IMR-90 (cell line): ENCODE measurements at regions of chr6 and their contacts with region 1.

Region 1: GRCh38 chr6:159701411-159701999 is 8.5 kb upstream of the SOD2 start:
- DNase-seq: peak; percentile 97
- ATAC-seq: peak; percentile 82
- H3K4me3 ChIP-seq: no peak overlapping the region
- H3K27ac ChIP-seq: peak overlapping the region; percentile 93
- H3K4me1 ChIP-seq: peaks cover 9% of the 10 kb centered on the region
- H3K27me3 ChIP-seq: no peaks in the 10 kb centered on the region
- CTCF ChIP-seq: no peak
- POLR2A ChIP-seq: no peak
- RAD21 ChIP-seq: no peak

Region 2: GRCh38 chr6:159726918-159727716 is 25.6 kb after region 1 on chr6 and contains the start of gene WTAP:
- CTCF ChIA-PET with region 1: no interaction called
- POLR2A ChIA-PET with region 1: no interaction called
- dilution Hi-C with region 1: no loop called
- in situ Hi-C with region 1: no loop called
- intact Hi-C with region 1: loop called (anchors 2 kb)
- DNase-seq: peak; percentile 92
- ATAC-seq: peak; percentile 95
- H3K4me3 ChIP-seq: peak within 1 kb of the TSS; percentile 98
- H3K27ac ChIP-seq: peak within 1 kb of the TSS; percentile 99
- H3K4me1 ChIP-seq: peaks cover 3% of the 10 kb centered on the region; the same call in 1 of the 2 replicates
- H3K27me3 ChIP-seq: no peaks in the 10 kb centered on the region
- CTCF ChIP-seq: no peak
- POLR2A ChIP-seq: peak; percentile 94
- RAD21 ChIP-seq: no peak
- total RNA-seq, gene WTAP: 92.3 and 124 TPM in 2 replicates